Activated CD4-positive, alpha-beta memory T cell treated with anti-CD3 and anti-CD28 coated beads for 36 hours (primary cell): ENCODE measurements at regions of chr7 and their contacts with region 1.

Region 1: GRCh38 chr7:104848138-104848990 is 165.6 kb upstream of the KMT2E start:
- DNase-seq: peak; percentile 55
- H3K4me3 Mint-ChIP-seq: no peak overlapping the region
- H3K27ac Mint-ChIP-seq: no peak overlapping the region
- H3K4me1 Mint-ChIP-seq: no peaks in the 10 kb centered on the region
- H3K27me3 Mint-ChIP-seq: peaks cover 8% of the 10 kb centered on the region

Region 2: DNA sequence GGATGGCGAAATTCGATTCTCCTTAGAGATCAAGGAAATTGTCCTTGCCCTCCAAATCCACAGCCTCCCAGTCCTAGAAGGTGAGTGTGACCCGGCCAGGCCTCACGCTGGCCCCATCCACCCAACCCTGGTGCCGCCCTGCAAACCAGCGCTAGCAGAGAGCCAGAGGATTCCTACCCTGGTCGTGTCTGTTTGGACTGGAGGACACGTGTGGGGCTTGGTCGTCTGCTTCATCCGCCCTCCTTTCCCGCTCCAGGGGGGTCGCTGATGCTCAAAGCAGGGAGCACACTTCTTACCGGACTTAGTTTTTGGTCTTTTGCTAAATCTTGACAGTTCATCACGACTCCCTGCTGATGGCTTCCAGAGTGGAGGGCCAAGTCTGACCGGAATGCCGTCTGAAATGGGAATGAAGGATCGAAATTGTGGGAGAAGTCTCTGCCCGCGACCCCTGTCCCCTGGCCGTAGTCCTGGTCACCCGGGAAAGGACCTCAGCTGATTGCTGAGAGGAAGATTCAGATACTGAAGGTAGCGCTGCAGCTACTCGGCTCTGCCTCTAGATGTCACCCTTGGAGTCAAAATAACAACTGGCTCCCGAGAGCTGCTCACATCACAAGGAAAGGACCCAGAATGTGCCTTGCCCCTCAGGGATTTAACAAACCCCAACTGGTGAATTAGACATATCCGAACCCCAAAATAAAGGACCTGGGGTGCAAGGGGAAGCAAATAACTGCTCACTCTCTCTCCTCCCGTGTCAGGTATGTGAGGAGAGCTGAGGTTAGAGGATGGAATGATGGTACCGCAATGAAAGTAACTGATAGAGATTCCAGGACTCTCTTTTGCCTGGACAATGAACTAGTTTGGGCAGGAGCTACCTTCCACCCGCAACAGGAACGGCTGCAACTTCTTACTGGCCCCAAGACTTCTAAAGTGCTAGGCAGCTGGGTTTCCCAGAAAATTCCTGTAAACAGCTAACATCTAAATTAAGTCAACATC is 617.0 kb before region 1 on chr7:
- CTCF ChIA-PET with region 1: interaction called, 58 read pairs
- POLR2A ChIA-PET with region 1: no interaction called
- intact Hi-C with region 1: loop called (anchors 2 kb)
- DNase-seq: peak; percentile 46
- H3K4me3 Mint-ChIP-seq: no peak overlapping the region
- H3K27ac Mint-ChIP-seq: no peak overlapping the region
- H3K4me1 Mint-ChIP-seq: no peaks in the 10 kb centered on the region
- H3K27me3 Mint-ChIP-seq: peaks cover 10% of the 10 kb centered on the region

Region 3: GRCh38 chr7:104272767-104273384 is 575.5 kb before region 1 on chr7:
- CTCF ChIA-PET with region 1: interaction called, 3 read pairs
- POLR2A ChIA-PET with region 1: no interaction called
- intact Hi-C with region 1: loop called (anchors 1 kb)
- DNase-seq: no peak
- H3K4me3 Mint-ChIP-seq: no peak overlapping the region
- H3K27ac Mint-ChIP-seq: no peak overlapping the region
- H3K4me1 Mint-ChIP-seq: no peaks in the 10 kb centered on the region
- H3K27me3 Mint-ChIP-seq: peaks cover 17% of the 10 kb centered on the region

Region 4: DNA sequence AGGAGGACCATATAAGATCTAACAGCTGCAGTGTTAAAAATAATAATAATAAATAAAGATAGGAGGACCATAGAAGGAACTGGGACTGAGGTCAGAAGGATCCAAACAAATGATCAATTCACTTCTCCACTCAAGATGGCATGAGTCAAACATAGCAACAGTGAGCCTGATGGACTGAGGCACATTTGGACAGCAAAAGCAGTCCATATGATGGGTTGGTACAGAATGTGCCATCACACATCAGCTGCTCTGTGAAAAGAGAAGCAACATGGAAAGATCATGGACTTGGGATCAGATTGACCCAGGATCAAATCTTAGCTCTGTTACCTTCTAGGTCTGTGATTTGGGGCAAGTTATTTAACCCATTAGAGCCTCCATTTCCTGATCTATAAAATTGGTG is 23.3 kb before region 1 on chr7:
- CTCF ChIA-PET with region 1: interaction called, 13 read pairs
- POLR2A ChIA-PET with region 1: no interaction called
- intact Hi-C with region 1: no loop called
- DNase-seq: no peak
- H3K4me3 Mint-ChIP-seq: no peak overlapping the region
- H3K27ac Mint-ChIP-seq: no peak overlapping the region
- H3K4me1 Mint-ChIP-seq: no peaks in the 10 kb centered on the region
- H3K27me3 Mint-ChIP-seq: no peaks in the 10 kb centered on the region

Region 5: GRCh38 chr7:104862719-104863118 is 14.4 kb after region 1 on chr7:
- CTCF ChIA-PET with region 1: interaction called, 13 read pairs
- POLR2A ChIA-PET with region 1: no interaction called
- intact Hi-C with region 1: no loop called
- DNase-seq: no peak
- H3K4me3 Mint-ChIP-seq: no peak overlapping the region
- H3K27ac Mint-ChIP-seq: no peak overlapping the region
- H3K4me1 Mint-ChIP-seq: peaks cover 10% of the 10 kb centered on the region
- H3K27me3 Mint-ChIP-seq: peaks cover 16% of the 10 kb centered on the region

Region 6: DNA sequence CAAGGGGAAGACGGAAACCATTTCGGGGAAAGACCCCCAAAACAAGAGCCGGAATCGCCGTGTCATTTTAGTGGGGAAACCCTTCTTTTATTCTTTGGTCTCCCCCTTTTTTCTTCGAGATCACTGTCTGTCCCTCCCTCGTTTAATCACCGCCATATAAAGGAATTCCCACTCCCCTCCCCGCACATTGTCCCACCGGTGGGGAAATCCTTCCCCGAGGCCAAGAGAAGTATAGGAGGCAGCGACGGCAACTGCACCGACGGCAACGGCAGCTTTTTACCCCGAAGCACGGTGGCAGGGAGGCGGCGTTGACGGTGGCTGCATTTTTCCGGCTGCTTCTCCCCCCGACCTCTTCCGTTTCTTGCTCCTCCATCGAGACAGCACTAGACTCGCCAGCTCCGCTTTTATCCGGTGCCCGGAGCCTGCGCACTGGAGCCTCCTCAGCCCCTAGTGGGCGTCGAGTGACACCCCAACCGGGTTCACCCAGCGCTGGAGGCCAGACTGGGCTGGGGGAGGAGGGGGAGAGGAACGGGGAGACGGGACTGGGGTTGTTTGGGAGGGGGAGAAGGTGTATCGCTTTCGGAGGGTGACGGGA is 165.0 kb after region 1 on chr7:
- CTCF ChIA-PET with region 1: no interaction called
- POLR2A ChIA-PET with region 1: no interaction called
- intact Hi-C with region 1: no loop called
- DNase-seq: peak; percentile 96
- H3K4me3 Mint-ChIP-seq: peak overlapping the region; percentile 99
- H3K27ac Mint-ChIP-seq: peak overlapping the region; percentile 100
- H3K4me1 Mint-ChIP-seq: peaks cover 20% of the 10 kb centered on the region
- H3K27me3 Mint-ChIP-seq: no peaks in the 10 kb centered on the region